AG04450 (cell line): ENCODE measurements at regions of chr12 and their contacts with region 1.

Region 1: GRCh38 chr12:98572010-98572409 is 21.5 kb upstream of the SLC25A3 start:
- DNase-seq: no peak
- H3K4me3 ChIP-seq: no peak overlapping the region
- H3K27ac ChIP-seq: no peak overlapping the region
- H3K27me3 ChIP-seq: no peaks in the 10 kb centered on the region
- CTCF ChIP-seq: peak; percentile 41

Region 2: DNA sequence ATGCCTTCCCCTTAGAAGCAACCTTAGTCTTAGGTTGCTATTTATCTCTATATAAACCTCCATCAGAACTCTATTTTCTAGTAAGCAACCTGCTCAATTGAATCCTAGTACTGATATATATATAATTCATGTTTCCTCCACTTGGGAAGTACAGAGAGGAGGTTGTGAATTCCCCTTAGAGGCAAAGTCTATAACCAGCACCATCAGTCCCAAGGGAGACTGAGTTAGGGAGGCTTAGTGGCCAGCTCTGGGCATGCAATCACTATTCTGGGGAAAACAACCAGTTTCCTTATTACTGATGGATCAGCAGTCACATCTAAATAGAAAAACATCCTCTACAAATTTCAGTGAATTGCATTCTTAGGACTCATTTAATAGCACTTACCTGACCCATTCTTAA is 620.3 kb before region 1 on chr12:
- CTCF ChIA-PET with region 1: no interaction called
- POLR2A ChIA-PET with region 1: no interaction called
- DNase-seq: no peak
- H3K4me3 ChIP-seq: no peak overlapping the region
- H3K27ac ChIP-seq: no peak overlapping the region
- H3K27me3 ChIP-seq: no peaks in the 10 kb centered on the region
- CTCF ChIP-seq: no peak

Region 3: GRCh38 chr12:98516184-98516873 is 55.7 kb before region 1 on chr12:
- CTCF ChIA-PET with region 1: interaction called, 15 read pairs
- POLR2A ChIA-PET with region 1: no interaction called
- DNase-seq: peak; percentile 59
- H3K4me3 ChIP-seq: peak overlapping the region; percentile 90
- H3K27ac ChIP-seq: peak overlapping the region; percentile 31
- H3K27me3 ChIP-seq: no peaks in the 10 kb centered on the region
- CTCF ChIP-seq: peak; percentile 75

Region 4: GRCh38 chr12:98544751-98545150 is 27.3 kb before region 1 on chr12:
- CTCF ChIA-PET with region 1: interaction called, 58 read pairs
- POLR2A ChIA-PET with region 1: no interaction called
- DNase-seq: no peak
- H3K4me3 ChIP-seq: no peak overlapping the region
- H3K27ac ChIP-seq: no peak overlapping the region
- H3K27me3 ChIP-seq: no peaks in the 10 kb centered on the region
- CTCF ChIP-seq: no peak

Region 5: GRCh38 chr12:98587084-98587483 is 15.1 kb after region 1 on chr12:
- CTCF ChIA-PET with region 1: interaction called, 59 read pairs
- POLR2A ChIA-PET with region 1: interaction called, 9 read pairs
- DNase-seq: no peak
- H3K4me3 ChIP-seq: no peak overlapping the region
- H3K27ac ChIP-seq: no peak overlapping the region
- H3K27me3 ChIP-seq: no peaks in the 10 kb centered on the region
- CTCF ChIP-seq: no peak

Region 6: DNA sequence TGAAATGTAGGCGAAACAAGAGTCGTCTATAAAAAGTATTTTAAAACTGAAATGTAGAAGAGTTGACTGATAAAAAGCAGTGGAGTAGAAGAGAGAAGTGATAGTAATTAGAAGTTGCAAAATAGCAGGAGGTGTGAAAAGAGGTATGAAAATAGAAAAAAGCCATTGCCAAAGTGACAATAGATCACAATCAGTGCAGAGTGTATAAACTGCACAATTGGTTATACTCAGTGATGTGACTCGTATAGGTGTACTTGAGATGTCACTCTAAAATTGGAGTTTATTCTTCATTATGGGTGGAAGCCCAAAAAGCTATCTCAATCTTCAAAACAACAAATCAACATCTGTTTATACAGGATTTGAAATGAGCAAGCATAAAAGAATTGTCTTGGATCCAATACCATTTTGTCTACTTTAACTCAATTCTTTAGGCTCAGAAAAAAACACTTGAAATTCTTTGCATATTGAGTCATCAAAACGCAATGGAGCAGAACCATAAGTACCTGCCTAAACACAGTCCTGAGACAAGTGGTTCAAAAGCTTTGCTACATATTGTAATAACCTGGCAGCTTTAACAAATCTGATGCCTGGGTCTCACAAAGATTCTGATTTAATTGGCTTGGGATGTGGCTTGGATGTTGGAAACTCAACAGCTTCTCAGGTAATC is 63.8 kb after region 1 on chr12:
- CTCF ChIA-PET with region 1: interaction called, 15 read pairs
- POLR2A ChIA-PET with region 1: interaction called, 9 read pairs
- DNase-seq: peak; percentile 47
- H3K4me3 ChIP-seq: no peak overlapping the region
- H3K27ac ChIP-seq: no peak overlapping the region
- H3K27me3 ChIP-seq: no peaks in the 10 kb centered on the region
- CTCF ChIP-seq: no peak

Region 7: GRCh38 chr12:99567072-99567471 is 995.1 kb after region 1 on chr12:
- CTCF ChIA-PET with region 1: interaction called, 10 read pairs
- POLR2A ChIA-PET with region 1: no interaction called
- DNase-seq: no peak
- H3K4me3 ChIP-seq: no peak overlapping the region
- H3K27ac ChIP-seq: no peak overlapping the region
- H3K27me3 ChIP-seq: no peaks in the 10 kb centered on the region
- CTCF ChIP-seq: no peak